Ascending aorta (tissue), 2 donors: ENCODE measurements at regions of chr4 and their contacts with region 1.

Region 1: GRCh38 chr4:41934815-41935651 is at the start of gene TMEM33:
- DNase-seq: peak; percentile 57 to 91
- H3K4me3 ChIP-seq: peak within 1 kb of the TSS; percentile 82 to 88
- H3K27ac ChIP-seq: peak within 1 kb of the TSS; percentile 62 to 72
- H3K4me1 ChIP-seq: peaks cover 4 to 6% of the 10 kb centered on the region in 2 donors
- H3K27me3 ChIP-seq: no peaks in the 10 kb centered on the region
- CTCF ChIP-seq: no peak
- total RNA-seq, gene TMEM33: 65.1 TPM

Region 2: DNA sequence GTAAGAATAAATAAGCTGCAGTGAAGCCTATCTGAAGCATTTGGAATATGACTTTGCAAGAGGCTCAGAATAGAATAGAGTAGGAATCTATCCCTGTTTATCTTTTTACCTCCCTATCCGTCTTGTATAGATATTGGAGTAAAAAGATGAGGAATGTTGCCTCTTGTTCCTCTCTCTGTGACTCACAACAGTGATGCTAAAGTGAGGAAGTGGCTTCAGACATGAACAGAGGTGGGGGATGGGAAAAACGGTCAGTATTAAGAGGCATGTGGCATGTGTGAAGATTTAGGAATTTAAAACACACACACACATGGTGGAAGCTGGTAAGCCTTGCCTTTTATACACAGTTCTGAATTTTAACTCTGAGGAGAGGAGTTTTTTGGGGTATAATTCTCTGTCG is 42.7 kb after region 1 on chr4:
- intact Hi-C with region 1: no loop called
- DNase-seq: no peak
- H3K4me3 ChIP-seq: no peak overlapping the region
- H3K27ac ChIP-seq: no peak overlapping the region
- H3K4me1 ChIP-seq: no peaks in the 10 kb centered on the region
- H3K27me3 ChIP-seq: no peaks in the 10 kb centered on the region
- CTCF ChIP-seq: no peak

Region 3: DNA sequence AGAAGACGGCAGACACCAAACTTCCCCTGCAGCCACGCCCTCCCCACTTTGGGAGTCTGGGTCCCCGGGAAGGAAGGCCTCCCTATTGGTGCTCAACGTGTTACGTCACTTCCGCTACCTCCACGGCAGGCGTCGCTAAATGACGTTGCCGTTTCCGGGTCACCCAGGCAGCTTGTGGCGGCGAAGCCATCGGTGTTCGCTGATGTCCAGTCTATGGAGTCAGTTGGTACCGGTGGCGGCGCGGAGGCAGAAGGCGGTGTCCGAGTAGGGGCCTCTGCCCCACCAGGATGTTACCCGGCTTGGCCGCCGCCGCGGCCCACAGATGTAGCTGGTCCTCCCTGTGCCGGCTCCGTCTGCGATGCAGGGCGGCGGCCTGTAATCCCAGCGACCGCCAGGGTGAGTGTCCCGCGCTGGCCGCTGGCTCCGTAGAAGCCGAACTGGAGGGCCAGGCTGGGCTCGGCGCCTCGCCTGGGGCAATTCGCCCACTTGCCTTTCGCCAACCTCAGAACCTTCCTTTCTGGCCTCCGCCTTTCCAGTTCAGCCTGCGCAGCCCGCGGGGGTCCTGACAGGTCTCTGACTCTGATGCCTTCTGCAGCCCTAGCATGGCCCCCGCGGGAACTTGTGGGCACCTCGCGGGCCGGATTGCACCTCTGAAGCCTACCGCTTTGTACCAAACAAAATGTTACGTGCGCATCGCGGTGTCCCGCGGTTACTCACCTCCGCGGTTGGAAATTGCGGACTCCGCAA is 55.5 kb after region 1 on chr4 and contains the start of gene SLC30A9:
- intact Hi-C with region 1: loop called (anchors 1 kb)
- DNase-seq: peak; percentile 88 to 98
- H3K4me3 ChIP-seq: peak within 1 kb of the TSS; percentile 78 to 99
- H3K27ac ChIP-seq: peak within 1 kb of the TSS; percentile 81 to 93
- H3K4me1 ChIP-seq: peaks cover 7 to 17% of the 10 kb centered on the region in 2 donors
- H3K27me3 ChIP-seq: no peaks in the 10 kb centered on the region
- CTCF ChIP-seq: peak; percentile 30 to 46 (median 40)
- total RNA-seq, gene SLC30A9: 41.0 TPM

Region 4: DNA sequence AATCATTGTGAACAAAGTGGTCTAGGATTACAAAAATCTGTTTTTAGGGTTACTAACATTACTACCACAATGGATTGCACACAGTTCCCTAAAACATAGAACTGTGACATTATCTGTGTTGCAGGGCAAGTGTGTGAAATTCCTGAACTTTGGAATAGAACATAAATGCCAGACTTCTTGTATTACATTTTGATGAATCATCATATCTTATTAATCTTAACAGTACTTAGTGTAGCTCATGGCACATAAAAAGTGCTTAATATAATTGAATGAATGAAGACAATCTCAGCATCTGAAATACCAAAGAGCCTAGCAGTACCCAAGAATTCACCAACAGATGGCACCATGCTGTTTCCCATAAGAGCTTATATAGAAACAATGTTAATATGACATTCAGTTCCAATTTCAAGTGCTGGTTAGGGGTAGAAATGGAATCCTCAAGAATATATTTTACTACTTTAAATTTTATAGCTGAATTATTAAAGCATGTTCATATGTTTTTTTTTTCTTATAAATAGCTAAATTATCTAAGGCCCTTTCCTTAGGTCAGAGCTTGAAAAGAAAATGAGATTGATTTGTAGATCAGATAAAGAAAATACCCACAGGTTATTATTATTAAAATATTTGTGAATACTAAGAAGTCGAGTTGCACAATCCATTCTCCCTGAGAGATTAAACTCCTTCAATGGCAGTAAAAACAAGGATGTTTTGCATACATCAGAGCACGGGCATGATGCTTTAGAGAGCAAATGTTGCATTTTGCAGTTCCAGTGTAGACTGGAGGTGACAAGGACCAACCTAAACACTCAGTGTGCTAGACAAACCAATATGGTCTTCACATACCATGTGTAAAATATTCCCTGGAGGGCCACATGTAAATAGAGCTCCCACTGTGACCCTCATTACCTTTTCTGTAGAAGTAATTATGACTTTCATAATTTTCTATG is 436.5 kb after region 1 on chr4:
- intact Hi-C with region 1: no loop called
- DNase-seq: no peak
- H3K4me3 ChIP-seq: no peak overlapping the region
- H3K27ac ChIP-seq: no peak overlapping the region
- H3K4me1 ChIP-seq: no peaks in the 10 kb centered on the region
- H3K27me3 ChIP-seq: no peaks in the 10 kb centered on the region
- CTCF ChIP-seq: peak; percentile 16 to 56 (median 30)